ENCODE measurements at regions of chr11 and their contacts with region 1.

Region 1: GRCh38 chr11:123246749-123247495 is 51.9 kb upstream of the CLMP start:
- DNase-seq: peak; percentile 81
- ATAC-seq: peak; percentile 87
- H3K4me3 ChIP-seq: no peak overlapping the region
- H3K27ac ChIP-seq: peak overlapping the region; percentile 10; the same call in 1 of the 2 replicates
- H3K4me1 ChIP-seq: peaks cover 19% of the 10 kb centered on the region
- H3K27me3 ChIP-seq: no peaks in the 10 kb centered on the region
- CTCF ChIP-seq: peak; percentile 98
- POLR2A ChIP-seq: 0 out of 2 replicates have a peak, but pooled peaks have one; percentile 42
- RAD21 ChIP-seq: peak; percentile 99

Region 2: GRCh38 chr11:122758974-122759373 is 487.9 kb before region 1 on chr11:
- CTCF ChIA-PET with region 1: no interaction called
- POLR2A ChIA-PET with region 1: no interaction called
- dilution Hi-C with region 1: no loop called
- in situ Hi-C with region 1: no loop called
- intact Hi-C with region 1: no loop called
- DNase-seq: peak; percentile 18
- ATAC-seq: no peak
- H3K4me3 ChIP-seq: no peak overlapping the region
- H3K27ac ChIP-seq: no peak overlapping the region
- H3K4me1 ChIP-seq: no peaks in the 10 kb centered on the region; the same call in 1 of the 2 replicates
- H3K27me3 ChIP-seq: no peaks in the 10 kb centered on the region
- CTCF ChIP-seq: no peak
- POLR2A ChIP-seq: no peak
- RAD21 ChIP-seq: no peak

Region 3: DNA sequence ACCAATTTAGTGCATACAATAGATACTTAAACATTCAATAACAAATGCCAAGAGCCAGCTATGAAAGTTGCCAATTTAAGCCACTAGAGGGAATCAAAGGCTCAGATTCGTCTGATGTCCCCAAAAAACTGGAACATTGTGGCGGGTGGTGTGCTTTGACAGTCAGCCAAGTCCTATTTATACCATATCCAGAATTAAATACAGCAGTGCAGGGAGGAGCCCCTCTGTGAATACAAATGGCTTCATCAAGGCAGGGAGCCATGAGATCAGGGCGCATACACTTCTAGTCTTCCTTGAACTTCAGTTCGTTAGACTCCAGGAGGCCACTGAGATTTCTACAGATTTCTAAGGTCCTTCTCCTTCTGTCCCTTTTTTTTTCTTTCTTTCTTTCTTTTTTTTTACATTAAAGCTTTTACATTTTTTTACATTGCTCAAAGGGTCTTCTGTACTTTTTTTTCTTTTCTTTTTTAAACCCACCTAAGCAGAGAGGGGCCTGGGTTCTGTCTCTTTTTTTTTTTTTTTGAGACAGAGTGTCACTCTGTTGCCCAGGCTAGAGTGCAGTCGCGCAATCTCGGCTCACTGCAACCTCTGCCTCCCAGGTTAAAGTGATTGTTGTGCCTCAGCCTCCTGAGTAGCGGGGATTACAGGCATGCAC is 143.5 kb before region 1 on chr11:
- CTCF ChIA-PET with region 1: interaction called, 42 read pairs
- POLR2A ChIA-PET with region 1: no interaction called
- dilution Hi-C with region 1: loop called (anchors 25 kb)
- in situ Hi-C with region 1: no loop called
- intact Hi-C with region 1: loop called (anchors 1 kb)
- DNase-seq: peak; percentile 75
- ATAC-seq: peak; percentile 50
- H3K4me3 ChIP-seq: no peak overlapping the region
- H3K27ac ChIP-seq: no peak overlapping the region
- H3K4me1 ChIP-seq: peaks cover 10% of the 10 kb centered on the region
- H3K27me3 ChIP-seq: no peaks in the 10 kb centered on the region
- CTCF ChIP-seq: peak; percentile 75
- POLR2A ChIP-seq: no peak
- RAD21 ChIP-seq: peak; percentile 83

Region 4: GRCh38 chr11:123166071-123166559 is 80.8 kb before region 1 on chr11:
- CTCF ChIA-PET with region 1: interaction called, 17 read pairs
- POLR2A ChIA-PET with region 1: no interaction called
- dilution Hi-C with region 1: no loop called
- in situ Hi-C with region 1: loop called (anchors 10 kb)
- intact Hi-C with region 1: loop called (anchors 1 kb)
- DNase-seq: peak; percentile 97
- ATAC-seq: peak; percentile 89
- H3K4me3 ChIP-seq: no peak overlapping the region
- H3K27ac ChIP-seq: peak overlapping the region; percentile 89
- H3K4me1 ChIP-seq: peaks cover 39% of the 10 kb centered on the region
- H3K27me3 ChIP-seq: no peaks in the 10 kb centered on the region
- CTCF ChIP-seq: peak; percentile 62
- POLR2A ChIP-seq: no peak
- RAD21 ChIP-seq: peak; percentile 60

Region 5: GRCh38 chr11:123195188-123196059 is 51.5 kb before region 1 on chr11 and contains the start of gene CLMP:
- CTCF ChIA-PET with region 1: interaction called, 11 read pairs
- POLR2A ChIA-PET with region 1: no interaction called
- dilution Hi-C with region 1: no loop called
- in situ Hi-C with region 1: no loop called
- intact Hi-C with region 1: loop called (anchors 2 kb)
- DNase-seq: peak; percentile 82
- ATAC-seq: peak; percentile 79
- H3K4me3 ChIP-seq: peak within 1 kb of the TSS; percentile 73
- H3K27ac ChIP-seq: peak within 1 kb of the TSS; percentile 93
- H3K4me1 ChIP-seq: peaks cover 23% of the 10 kb centered on the region
- H3K27me3 ChIP-seq: no peaks in the 10 kb centered on the region
- CTCF ChIP-seq: no peak
- POLR2A ChIP-seq: peak; percentile 78; the same call in 1 of the 2 replicates
- RAD21 ChIP-seq: no peak
- total RNA-seq, gene CLMP: 54.7 and 56.1 TPM in 2 replicates

Region 6: DNA sequence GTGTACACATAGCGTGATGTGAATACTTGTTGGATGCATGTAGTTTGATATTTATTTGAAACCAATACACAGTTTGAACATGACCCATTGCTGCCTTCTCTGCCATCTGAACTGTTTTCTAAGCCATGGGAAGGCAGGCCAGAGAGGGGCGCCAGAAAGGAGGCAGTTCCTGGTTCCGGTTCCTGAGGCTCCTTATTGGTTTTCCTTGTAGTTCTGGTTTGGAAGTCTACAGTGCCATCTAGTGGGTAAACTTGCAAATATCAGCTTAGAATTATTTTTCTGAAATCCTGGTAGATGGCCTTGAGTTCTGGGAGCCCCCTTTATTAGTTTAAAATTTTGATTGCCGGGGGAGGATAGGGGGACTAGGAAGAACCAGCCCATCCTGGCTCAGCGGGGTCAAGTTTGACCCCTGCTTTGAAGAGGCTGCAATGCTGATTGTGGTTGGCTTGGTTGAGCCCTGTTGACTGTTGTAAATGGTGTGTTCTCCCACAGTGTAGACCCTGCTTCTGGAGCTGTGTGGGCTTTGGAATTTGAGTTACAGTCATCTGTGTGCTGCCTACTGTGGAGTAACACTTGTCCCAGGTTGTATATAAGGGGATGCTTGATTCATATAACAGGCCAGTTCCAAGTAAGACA is 231.5 kb after region 1 on chr11:
- CTCF ChIA-PET with region 1: no interaction called
- POLR2A ChIA-PET with region 1: no interaction called
- dilution Hi-C with region 1: no loop called
- in situ Hi-C with region 1: no loop called
- intact Hi-C with region 1: loop called (anchors 5 kb)
- DNase-seq: peak; percentile 85
- ATAC-seq: peak; percentile 78
- H3K4me3 ChIP-seq: no peak overlapping the region
- H3K27ac ChIP-seq: no peak overlapping the region
- H3K4me1 ChIP-seq: peaks cover 16% of the 10 kb centered on the region
- H3K27me3 ChIP-seq: no peaks in the 10 kb centered on the region
- CTCF ChIP-seq: peak; percentile 92
- POLR2A ChIP-seq: no peak
- RAD21 ChIP-seq: peak; percentile 93